Activated T-helper 1 cell treated with anti-CD3 and anti-CD28 coated beads, Interleukin-12 subunit alpha, Interleukin-12 subunit beta, Interleukin-2, Interleukin-4 antibody, amounts not matched to agents 30 ng/mL and 10 ng/mL and 1 ng/mL, durations not matched to agents 14 hours and 24 hours and 36 hours (primary cell): ENCODE measurements at regions of chr10 and their contacts with region 1.

Region 1: GRCh38 chr10:3828404-3829155 is 43.6 kb upstream of the KLF6 start:
- DNase-seq: no peak
- H3K4me3 Mint-ChIP-seq: peak overlapping the region; percentile 58
- H3K27ac Mint-ChIP-seq: peak overlapping the region; percentile 93
- H3K4me1 Mint-ChIP-seq: peaks cover 57% of the 10 kb centered on the region
- H3K27me3 Mint-ChIP-seq: no peaks in the 10 kb centered on the region

Region 2: DNA sequence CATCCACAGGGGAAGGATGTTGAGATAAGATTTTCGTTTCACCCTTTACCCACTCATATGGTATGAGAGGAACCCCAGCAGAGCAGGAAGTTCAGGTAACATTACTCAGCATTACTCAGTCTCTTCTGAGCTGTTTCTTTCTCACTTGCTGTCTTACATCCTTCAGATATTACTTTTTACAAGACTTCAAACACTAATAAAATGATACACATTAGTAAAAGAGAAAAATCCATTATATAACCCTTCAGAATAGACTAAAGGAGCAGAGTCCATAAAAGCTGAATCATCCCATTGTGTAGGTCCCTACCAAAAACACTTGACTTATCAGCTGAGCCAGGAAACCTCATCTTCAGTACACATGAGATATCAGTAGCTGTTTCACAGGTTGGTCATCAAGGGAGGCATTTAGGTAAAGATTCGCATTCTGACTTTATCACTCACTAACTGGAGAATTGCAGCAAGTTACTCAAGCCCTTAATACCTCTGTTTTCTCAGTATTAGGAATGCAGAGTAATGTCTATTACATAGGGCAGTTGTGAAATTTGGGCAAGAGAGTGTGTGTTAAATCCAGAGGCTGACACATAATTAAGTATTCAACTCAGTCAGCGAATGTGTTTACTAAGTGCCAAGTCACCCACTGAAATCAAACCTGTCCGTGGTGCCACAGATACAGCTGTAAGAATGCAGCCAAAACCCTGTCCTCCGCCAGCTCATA is 88.3 kb before region 1 on chr10:
- intact Hi-C with region 1: no loop called
- DNase-seq: no peak
- H3K4me3 Mint-ChIP-seq: no peak overlapping the region
- H3K27ac Mint-ChIP-seq: peak overlapping the region; percentile 7
- H3K4me1 Mint-ChIP-seq: peaks cover 30% of the 10 kb centered on the region
- H3K27me3 Mint-ChIP-seq: no peaks in the 10 kb centered on the region

Region 3: DNA sequence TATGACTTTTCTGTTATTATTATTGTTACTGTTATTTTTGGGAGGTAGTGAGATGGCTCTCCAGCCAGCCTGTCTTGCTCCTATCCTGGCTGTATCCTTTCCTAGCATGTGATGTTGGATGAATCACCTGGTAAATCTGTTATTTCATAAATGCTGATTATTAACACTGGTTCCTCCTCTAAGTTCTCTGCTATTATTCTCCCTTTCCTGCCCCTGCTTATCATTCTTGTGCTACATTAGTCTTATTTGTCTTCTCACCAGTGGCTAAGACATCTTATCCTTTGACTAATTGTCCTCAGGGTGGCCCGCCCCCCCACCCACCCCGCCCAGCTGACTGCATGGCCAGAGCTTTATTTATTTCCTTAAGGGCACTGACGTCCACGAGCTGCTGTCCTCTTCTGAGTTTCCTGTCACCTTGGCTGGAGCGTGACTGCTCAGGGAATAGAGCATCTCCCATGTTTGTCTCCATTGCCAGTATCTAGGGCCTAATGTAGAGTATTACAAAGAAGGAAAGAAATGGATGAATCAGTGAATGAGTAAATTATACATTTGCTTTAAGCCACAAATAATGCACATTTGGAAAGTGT is 66.6 kb after region 1 on chr10:
- intact Hi-C with region 1: loop called (anchors 2 kb)
- DNase-seq: no peak
- H3K4me3 Mint-ChIP-seq: no peak overlapping the region
- H3K27ac Mint-ChIP-seq: peak overlapping the region; percentile 18
- H3K4me1 Mint-ChIP-seq: peaks cover 35% of the 10 kb centered on the region
- H3K27me3 Mint-ChIP-seq: no peaks in the 10 kb centered on the region